Prostate gland (tissue), 2 donors: ENCODE measurements at regions of chr5 and their contacts with region 1.

Region 1: GRCh38 chr5:41843456-41844370 is 26.5 kb downstream of the OXCT1 start:
- DNase-seq: peak; percentile 23
- H3K4me3 ChIP-seq: no peak overlapping the region
- H3K27ac ChIP-seq: no peak overlapping the region
- H3K4me1 ChIP-seq: no peaks in the 10 kb centered on the region
- H3K27me3 ChIP-seq: no peaks in the 10 kb centered on the region
- CTCF ChIP-seq: peak; percentile 59 to 83 (median 74)
- POLR2A ChIP-seq: no peak

Region 2: DNA sequence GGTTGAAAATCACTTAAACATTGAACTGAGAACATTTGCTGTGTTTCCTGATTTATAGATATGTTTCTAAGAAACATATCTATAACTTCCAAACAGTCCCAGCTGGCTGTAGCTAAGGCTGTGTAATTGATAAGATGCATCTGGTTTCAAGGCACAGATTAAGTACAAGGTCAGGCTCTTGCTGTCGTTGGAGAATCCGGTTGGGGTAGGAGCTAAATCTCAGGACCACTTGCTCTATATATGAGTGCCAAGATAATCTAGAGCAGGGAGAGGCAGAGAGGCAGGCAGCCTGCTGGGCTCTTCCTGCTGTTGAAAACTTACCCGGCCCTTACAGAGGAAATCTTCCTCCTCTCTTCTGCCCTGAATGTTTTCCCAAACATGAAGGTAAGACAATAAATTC is 934.5 kb before region 1 on chr5 and contains the start of gene C7:
- intact Hi-C with region 1: loop called (anchors 5 kb)
- DNase-seq: no peak
- H3K4me3 ChIP-seq: peak within 1 kb of the TSS in 1 of 2 donors; percentile 3
- H3K27ac ChIP-seq: peak within 1 kb of the TSS in 1 of 2 donors; percentile 20
- H3K4me1 ChIP-seq: peaks cover 2% of the 10 kb centered on the region
- H3K27me3 ChIP-seq: no peaks in the 10 kb centered on the region
- CTCF ChIP-seq: no peak
- POLR2A ChIP-seq: no peak
- total RNA-seq, gene C7: 68.2 to 147 TPM

Region 3: DNA sequence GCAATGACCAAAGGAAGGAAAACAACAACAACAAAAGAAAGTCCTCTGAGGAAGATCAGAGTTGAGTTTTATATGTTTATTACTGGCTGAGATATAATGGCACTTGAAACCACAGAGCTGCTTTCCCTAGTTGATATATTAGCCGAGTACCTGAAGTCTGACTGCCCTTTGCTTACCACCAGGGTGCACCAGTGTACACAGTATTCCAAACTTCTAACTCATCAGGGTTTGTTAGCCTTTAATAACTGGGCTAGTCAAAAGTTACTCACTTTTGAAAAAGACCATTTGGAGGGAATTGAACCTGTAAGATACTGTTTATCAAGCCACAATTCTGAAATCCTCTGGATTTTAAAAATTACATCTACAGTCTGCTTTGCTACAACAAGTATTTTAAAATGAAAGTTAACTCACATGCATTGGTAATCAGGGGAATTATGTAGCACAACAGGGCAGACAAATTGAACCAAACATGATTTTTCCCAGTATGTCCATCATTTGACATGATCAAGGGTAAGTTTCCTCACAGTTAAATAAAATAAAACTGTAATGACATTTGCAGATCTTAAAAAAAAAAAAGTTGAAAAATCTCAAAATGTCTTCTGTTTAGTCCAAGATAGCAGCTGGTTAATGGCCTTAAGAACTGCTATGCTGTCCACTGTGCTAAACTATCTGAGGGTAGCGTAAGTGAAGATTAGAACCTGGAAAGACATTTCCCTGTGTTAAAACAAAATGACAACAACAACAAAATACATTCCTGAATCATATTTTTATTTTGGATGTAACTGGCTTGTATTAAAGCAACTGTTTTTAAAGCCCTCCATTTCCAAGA is 573.1 kb before region 1 on chr5:
- intact Hi-C with region 1: loop called (anchors 5 kb)
- DNase-seq: no peak
- H3K4me3 ChIP-seq: no peak overlapping the region
- H3K27ac ChIP-seq: no peak overlapping the region
- H3K4me1 ChIP-seq: no peaks in the 10 kb centered on the region
- H3K27me3 ChIP-seq: no peaks in the 10 kb centered on the region
- CTCF ChIP-seq: peak in 3 of 4 experiments; percentile 32 to 56 (median 49)
- POLR2A ChIP-seq: no peak

Region 4: DNA sequence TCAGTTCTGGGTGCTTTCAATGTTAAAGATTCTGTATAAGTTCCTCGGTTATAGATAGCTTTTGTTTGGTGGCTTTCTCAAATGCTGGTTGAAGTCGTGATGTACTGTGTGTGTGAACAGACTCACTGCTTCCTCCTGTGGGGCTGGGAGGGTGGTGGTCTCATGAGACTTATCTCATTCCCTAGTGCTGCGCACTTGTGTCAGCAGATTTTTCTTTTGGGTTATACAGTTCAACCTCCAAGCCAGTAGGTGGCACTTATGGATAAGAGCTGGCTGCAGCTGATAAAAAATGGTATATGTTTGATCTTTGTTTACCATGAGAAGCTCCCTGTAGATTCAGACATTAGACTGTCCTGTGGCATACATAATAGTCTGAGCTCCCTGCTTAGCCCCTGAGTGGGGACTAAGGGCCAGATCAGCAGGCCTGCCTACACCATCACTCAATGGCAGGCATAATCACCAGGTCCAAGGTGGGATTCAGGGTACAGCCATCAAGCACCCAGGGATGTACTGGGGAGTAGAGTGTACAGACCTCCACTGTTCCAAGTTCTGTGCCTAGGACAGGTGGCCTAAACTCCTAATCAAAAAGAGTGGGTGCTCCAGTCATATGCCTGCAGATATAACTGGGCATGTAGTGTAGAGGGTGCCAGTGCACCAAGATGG is 147.7 kb before region 1 on chr5:
- intact Hi-C with region 1: loop called (anchors 10 kb)
- DNase-seq: no peak
- H3K4me3 ChIP-seq: no peak overlapping the region
- H3K27ac ChIP-seq: no peak overlapping the region
- H3K4me1 ChIP-seq: no peaks in the 10 kb centered on the region
- H3K27me3 ChIP-seq: no peaks in the 10 kb centered on the region
- CTCF ChIP-seq: peak in 1 of 4 experiments; percentile 11
- POLR2A ChIP-seq: no peak

Region 5: GRCh38 chr5:41955432-41956024 is 111.8 kb after region 1 on chr5:
- intact Hi-C with region 1: no loop called
- DNase-seq: no peak
- H3K4me3 ChIP-seq: no peak overlapping the region
- H3K27ac ChIP-seq: no peak overlapping the region
- H3K4me1 ChIP-seq: no peaks in the 10 kb centered on the region
- H3K27me3 ChIP-seq: no peaks in the 10 kb centered on the region
- CTCF ChIP-seq: no peak
- POLR2A ChIP-seq: no peak